B cell (primary cell): ENCODE measurements at regions of chr10 and their contacts with region 1.

Region 1: DNA sequence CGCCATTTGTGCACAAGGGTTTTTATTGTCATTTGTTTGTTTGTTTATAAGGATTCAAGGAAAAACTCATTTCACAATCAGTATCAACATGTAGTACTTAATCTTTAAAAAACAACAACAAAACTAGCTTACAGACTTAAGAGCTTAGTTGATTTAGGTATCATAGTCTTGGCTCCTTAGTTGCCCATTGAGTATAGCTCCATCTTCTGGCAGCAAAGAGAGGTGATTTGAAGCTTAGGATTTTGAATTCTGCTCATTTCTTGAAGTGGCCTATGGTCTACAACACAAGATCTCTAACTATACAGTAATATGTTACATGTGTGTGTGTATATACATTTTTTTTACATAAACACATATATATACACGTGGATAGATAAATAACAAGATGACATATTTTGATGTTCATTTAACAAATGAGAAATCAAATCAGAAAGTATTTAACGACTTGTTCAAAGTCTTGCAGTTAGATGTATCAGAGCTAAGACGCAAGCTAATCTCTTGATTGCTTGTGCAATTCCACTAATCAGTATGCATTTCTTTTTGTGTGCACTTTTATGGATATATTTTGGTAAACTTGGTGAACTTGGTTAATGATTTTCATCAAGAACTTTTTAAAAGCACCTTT is 307.3 kb downstream of the CAMK1D start:
- DNase-seq: peak; percentile 71
- ATAC-seq: peak; percentile 65
- H3K4me3 ChIP-seq: no peak overlapping the region
- H3K4me3 Mint-ChIP-seq: no peak overlapping the region
- H3K27ac ChIP-seq: no peak overlapping the region
- H3K27ac Mint-ChIP-seq: no peak overlapping the region
- H3K4me1 ChIP-seq: peaks cover 5 to 6% of the 10 kb centered on the region in 2 donors
- H3K4me1 Mint-ChIP-seq: peaks cover 14% of the 10 kb centered on the region
- H3K27me3 ChIP-seq: no peaks in the 10 kb centered on the region
- H3K27me3 Mint-ChIP-seq: no peaks in the 10 kb centered on the region
- CTCF ChIP-seq: peak; percentile 86

Region 2: DNA sequence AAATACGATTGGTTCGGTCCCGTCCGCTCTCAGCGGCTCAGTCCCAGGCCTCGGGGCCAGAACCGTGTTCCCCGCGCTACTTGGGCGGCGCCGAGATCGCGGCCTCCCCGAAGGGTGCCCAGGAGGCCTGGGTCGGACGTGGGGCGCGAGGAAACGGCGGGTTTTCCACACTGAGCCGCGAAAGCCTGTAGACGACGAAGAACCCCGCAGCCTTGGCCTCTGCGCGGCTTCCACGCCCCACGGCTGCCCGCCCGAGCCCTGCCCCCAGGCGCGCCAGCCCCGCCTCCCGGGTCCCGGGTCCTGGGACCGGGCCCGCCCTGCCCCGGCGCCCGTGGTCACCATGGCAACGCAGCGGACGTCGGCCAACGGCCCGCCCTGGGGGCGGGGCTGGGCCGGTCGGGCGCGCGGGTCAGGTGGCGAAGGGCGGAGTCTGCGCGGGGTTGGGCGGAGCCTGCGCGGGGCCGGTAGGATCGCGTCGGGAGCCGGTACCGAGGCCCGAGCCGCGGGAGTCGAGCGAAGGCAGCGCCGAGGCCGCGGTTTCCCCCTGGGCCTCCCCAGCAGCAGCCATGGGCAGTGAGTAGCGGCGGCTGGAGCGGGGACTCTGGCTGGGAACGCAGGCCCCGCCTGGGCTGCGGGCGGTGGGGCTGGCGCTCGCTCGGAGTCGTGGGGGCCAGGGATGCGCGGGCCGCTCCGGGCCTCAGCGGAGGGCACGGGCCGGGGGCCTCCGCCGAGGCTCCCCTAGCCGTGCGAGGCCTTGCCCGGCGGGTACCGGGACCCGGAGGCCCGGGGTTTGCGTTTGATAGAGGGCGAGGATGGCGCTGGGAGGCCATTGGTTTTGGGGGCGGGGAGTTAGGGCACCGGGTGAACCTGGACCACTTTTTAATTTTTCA is 527.2 kb before region 1 on chr10 and contains the start of gene SEC61A2:
- CTCF ChIA-PET with region 1: interaction called, 3 read pairs
- POLR2A ChIA-PET with region 1: no interaction called
- intact Hi-C with region 1: loop called (anchors 1 kb)
- DNase-seq: peak; percentile 98
- ATAC-seq: peak; percentile 89
- H3K4me3 ChIP-seq: peak within 1 kb of the TSS; percentile 74 to 91 (median 85)
- H3K4me3 Mint-ChIP-seq: peak within 1 kb of the TSS; percentile 95
- H3K27ac ChIP-seq: peak within 1 kb of the TSS; percentile 92
- H3K27ac Mint-ChIP-seq: peak within 1 kb of the TSS; percentile 91
- H3K4me1 ChIP-seq: peaks cover 9 to 16% of the 10 kb centered on the region in 2 donors
- H3K4me1 Mint-ChIP-seq: peaks cover 15% of the 10 kb centered on the region
- H3K27me3 ChIP-seq: no peaks in the 10 kb centered on the region
- H3K27me3 Mint-ChIP-seq: no peaks in the 10 kb centered on the region
- CTCF ChIP-seq: no peak
- total RNA-seq, gene SEC61A2: 20.2 and 22.8 TPM in 2 replicates

Region 3: GRCh38 chr10:12241810-12242529 is 414.7 kb before region 1 on chr10:
- CTCF ChIA-PET with region 1: interaction called, 16 read pairs
- POLR2A ChIA-PET with region 1: no interaction called
- intact Hi-C with region 1: no loop called
- DNase-seq: peak; percentile 71
- ATAC-seq: no peak
- H3K4me3 ChIP-seq: no peak overlapping the region
- H3K4me3 Mint-ChIP-seq: peak overlapping the region; percentile 77
- H3K27ac ChIP-seq: peak overlapping the region; percentile 95
- H3K27ac Mint-ChIP-seq: peak overlapping the region; percentile 99
- H3K4me1 ChIP-seq: peaks cover 58 to 62% of the 10 kb centered on the region in 2 donors
- H3K4me1 Mint-ChIP-seq: peaks cover 60% of the 10 kb centered on the region
- H3K27me3 ChIP-seq: no peaks in the 10 kb centered on the region
- H3K27me3 Mint-ChIP-seq: no peaks in the 10 kb centered on the region
- CTCF ChIP-seq: no peak

Region 4: GRCh38 chr10:12264204-12264940 is 392.3 kb before region 1 on chr10:
- CTCF ChIA-PET with region 1: interaction called, 61 read pairs
- POLR2A ChIA-PET with region 1: interaction called, 6 read pairs
- intact Hi-C with region 1: no loop called
- DNase-seq: peak; percentile 99
- ATAC-seq: peak; percentile 89
- H3K4me3 ChIP-seq: peak overlapping the region in 4 of 5 experiments; percentile 18 to 34 (median 22)
- H3K4me3 Mint-ChIP-seq: peak overlapping the region; percentile 79
- H3K27ac ChIP-seq: peak overlapping the region; percentile 86 to 100
- H3K27ac Mint-ChIP-seq: peak overlapping the region; percentile 99
- H3K4me1 ChIP-seq: peaks cover 51 to 62% of the 10 kb centered on the region in 2 donors
- H3K4me1 Mint-ChIP-seq: peaks cover 50% of the 10 kb centered on the region
- H3K27me3 ChIP-seq: no peaks in the 10 kb centered on the region
- H3K27me3 Mint-ChIP-seq: no peaks in the 10 kb centered on the region
- CTCF ChIP-seq: peak; percentile 56

Region 5: GRCh38 chr10:12348870-12349628 is 307.6 kb before region 1 on chr10 and contains the start of gene CAMK1D:
- CTCF ChIA-PET with region 1: interaction called, 4 read pairs
- POLR2A ChIA-PET with region 1: no interaction called
- intact Hi-C with region 1: loop called (anchors 1 kb)
- DNase-seq: peak; percentile 96
- ATAC-seq: peak; percentile 63
- H3K4me3 ChIP-seq: peak within 1 kb of the TSS; percentile 74 to 93 (median 76)
- H3K4me3 Mint-ChIP-seq: peak within 1 kb of the TSS; percentile 99
- H3K27ac ChIP-seq: peak within 1 kb of the TSS; percentile 73 to 94
- H3K27ac Mint-ChIP-seq: peak within 1 kb of the TSS; percentile 99
- H3K4me1 ChIP-seq: peaks cover 35 to 43% of the 10 kb centered on the region in 2 donors
- H3K4me1 Mint-ChIP-seq: peaks cover 59% of the 10 kb centered on the region
- H3K27me3 ChIP-seq: no peaks in the 10 kb centered on the region
- H3K27me3 Mint-ChIP-seq: no peaks in the 10 kb centered on the region
- CTCF ChIP-seq: peak; percentile 2
- total RNA-seq, gene CAMK1D: 69.7 and 77.3 TPM in 2 replicates

Region 6: DNA sequence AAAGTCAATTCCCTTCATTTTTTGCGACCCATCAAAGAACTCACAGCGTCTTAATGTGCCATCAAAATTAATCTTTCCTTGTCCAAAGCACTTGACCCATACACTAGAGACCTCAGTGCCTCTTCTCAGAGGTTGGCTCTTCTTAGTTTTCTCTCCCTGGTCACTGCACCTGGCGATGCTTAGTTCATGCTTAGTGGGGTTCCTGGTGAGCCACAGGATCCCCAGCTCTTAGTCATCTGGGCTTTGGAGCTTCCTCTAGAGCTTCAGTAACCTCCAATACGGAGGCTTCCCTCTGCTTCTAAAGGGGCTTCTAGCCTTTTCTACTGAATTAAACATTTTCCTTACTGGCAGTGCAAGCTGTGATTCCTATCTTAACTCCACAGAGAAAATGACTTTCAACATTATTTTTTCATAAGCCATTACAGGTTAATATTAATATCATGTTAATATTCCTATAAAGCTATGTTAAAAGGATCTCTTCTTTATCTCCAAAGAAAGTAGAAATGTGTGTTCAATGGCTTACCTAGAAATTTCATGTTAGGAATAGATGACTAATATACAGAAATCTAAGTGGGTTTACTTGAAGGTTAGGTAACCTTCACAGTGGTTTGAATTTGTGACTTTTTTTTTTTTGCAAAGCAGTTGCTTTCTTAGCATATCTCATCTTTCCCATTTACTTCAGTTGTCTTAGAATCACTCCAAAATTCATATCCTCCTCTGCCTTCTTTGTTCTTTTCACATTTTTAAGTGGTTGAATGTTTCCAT is 12.1 kb before region 1 on chr10:
- CTCF ChIA-PET with region 1: interaction called, 21 read pairs
- POLR2A ChIA-PET with region 1: no interaction called
- intact Hi-C with region 1: no loop called
- DNase-seq: no peak
- ATAC-seq: no peak
- H3K4me3 ChIP-seq: no peak overlapping the region
- H3K4me3 Mint-ChIP-seq: no peak overlapping the region
- H3K27ac ChIP-seq: no peak overlapping the region
- H3K27ac Mint-ChIP-seq: no peak overlapping the region
- H3K4me1 ChIP-seq: no peaks in the 10 kb centered on the region
- H3K4me1 Mint-ChIP-seq: peaks cover 5% of the 10 kb centered on the region
- H3K27me3 ChIP-seq: no peaks in the 10 kb centered on the region
- H3K27me3 Mint-ChIP-seq: no peaks in the 10 kb centered on the region
- CTCF ChIP-seq: no peak